ENCODE measurements at regions of chrX and their contacts with region 1.

Region 1: DNA sequence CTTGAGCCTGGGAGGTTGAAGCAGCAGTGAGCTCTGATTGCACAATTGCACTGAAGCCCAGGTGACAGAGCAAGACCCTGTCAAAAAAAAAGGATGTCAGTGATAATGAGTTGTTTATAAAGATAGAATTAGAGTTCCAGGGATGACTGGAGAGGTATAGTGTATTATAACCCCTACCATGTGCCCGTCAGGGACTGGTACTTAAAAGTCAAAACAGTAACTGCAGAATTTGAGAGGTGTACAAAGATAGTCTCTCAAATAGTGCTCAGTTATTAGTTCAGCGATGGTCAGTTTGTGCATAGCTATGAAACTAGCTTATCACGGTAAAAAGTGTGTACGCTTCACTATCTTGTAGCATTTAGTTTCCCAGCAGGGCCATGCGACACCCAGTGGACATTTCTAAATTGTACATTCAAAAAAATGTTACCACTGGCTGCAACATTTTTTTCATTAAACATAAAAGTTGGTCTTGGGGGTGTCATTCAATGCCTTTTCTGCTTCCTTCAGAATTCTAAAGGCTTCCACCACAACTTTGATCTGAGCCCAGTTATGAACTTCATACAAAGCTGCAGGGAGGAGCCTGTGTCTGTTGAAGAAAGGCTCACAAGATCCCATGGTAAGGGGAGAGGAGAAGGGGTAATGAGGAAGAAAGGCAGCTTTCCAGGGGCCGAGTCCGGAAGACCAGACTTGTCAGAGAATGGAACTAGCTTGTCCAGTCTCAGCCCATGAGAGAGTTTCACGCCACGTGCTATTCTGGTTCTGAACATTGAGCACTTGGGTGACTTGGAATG is 9.2 kb upstream of the GYG2 start:
- DNase-seq: peak; percentile 51
- CTCF ChIP-seq: peak; percentile 16

Region 2: DNA sequence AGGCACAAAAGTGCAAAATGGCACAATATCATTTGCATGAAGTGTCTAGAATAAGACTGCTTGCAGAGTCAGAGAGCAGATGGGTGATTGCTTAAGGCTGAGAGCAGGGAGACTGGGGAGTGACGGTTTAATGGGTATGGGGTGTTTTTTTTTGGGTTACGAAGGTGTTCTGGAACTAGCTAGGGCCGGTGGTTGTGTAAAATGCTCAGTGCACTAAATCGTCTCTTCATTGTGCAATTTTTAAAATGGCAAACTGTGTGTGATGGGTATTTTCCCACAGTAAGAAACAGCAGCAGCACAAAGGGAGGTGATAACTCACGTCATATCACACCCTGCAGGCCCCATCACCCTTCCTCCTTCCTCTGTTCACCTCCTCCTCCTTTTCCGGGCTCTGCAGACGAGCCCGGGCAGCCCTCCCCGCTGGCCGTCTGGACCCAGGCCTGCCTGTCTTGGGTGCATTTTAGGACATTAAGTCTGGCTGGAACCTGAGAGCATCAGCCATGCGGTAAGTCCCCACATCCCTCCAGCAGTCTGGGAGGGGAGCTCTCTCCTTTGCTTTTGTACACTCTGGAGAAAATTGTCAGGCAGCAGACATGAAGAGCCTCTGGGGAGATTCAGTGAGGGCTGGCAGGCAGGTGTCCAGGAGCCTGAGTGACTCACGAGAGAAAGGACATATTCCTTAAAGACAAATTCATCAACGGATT is 1162.0 kb before region 1 on chrX:
- in situ Hi-C with region 1: loop called (anchors 25 kb)
- DNase-seq: peak; percentile 80
- CTCF ChIP-seq: no peak

Region 3: GRCh38 chrX:2647627-2648026 is 171.9 kb before region 1 on chrX:
- in situ Hi-C with region 1: loop called (anchors 5 kb)
- DNase-seq: no peak
- CTCF ChIP-seq: no peak

Measured in GM13976 (cell line).